Calu3 (cell line): ENCODE measurements at regions of chr19 and their contacts with region 1.

Region 1: DNA sequence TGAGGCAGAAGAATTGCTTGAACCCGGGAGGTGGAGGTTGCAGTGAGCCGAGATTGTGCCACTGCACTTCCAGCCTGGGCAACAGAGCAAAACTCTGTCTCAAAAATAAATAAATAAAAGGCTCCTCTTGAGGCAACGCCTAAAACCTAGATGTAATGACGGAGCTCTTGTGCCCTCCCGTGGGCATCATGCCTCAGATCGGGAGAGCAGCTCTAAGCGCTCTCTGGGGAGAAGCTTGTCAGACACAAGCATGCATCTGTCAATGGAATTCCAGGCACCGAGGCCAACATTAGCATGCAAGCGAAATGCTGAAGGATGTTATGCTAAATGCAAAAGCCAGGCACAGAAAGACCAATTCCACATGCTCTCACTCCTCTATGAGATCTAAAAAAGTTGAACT is 45.6 kb upstream of the MRI1 start:
- DNase-seq: peak; percentile 54
- H3K4me3 Mint-ChIP-seq: no peak overlapping the region
- H3K27ac Mint-ChIP-seq: no peak overlapping the region
- H3K4me1 Mint-ChIP-seq: no peaks in the 10 kb centered on the region
- H3K27me3 Mint-ChIP-seq: no peaks in the 10 kb centered on the region
- CTCF ChIP-seq: peak; percentile 24

Region 2: GRCh38 chr19:13597640-13598039 is 121.1 kb before region 1 on chr19:
- CTCF ChIA-PET with region 1: interaction called, 6 read pairs
- intact Hi-C with region 1: loop called (anchors 2 kb)
- DNase-seq: peak; percentile 55
- H3K4me3 Mint-ChIP-seq: no peak overlapping the region
- H3K27ac Mint-ChIP-seq: no peak overlapping the region
- H3K4me1 Mint-ChIP-seq: no peaks in the 10 kb centered on the region
- H3K27me3 Mint-ChIP-seq: peaks cover 64% of the 10 kb centered on the region
- CTCF ChIP-seq: peak; percentile 54

Region 3: DNA sequence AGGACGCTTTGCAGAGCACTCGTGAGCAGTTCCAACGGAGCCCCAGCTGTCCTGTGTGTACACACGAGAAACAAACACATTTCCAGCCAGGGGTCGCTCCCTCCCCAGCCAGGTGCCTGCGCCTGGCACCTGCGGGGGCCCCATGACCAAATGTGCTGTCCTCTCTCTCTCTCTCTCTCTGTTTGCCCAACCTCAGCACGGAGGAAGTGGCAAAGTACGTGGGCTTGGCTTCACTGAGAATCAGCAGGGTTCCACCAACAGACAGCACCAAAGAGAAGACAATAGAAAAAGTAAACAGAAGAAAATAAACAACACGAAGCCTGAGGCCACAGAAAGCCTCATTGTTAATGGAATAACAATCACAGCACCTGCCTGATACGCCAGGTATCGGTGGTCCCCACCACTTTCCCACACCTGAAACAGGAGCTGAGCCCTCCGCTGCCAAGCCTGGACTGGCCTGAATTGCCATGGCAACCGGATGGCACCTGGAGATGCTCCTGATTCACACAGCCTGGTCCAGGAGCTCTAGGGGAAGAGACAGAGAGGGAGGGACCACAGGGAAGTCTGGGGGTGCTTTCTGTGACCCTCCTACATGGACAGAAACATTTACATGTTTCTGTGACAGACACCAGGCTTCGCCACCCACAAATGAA is 108.6 kb before region 1 on chr19:
- CTCF ChIA-PET with region 1: interaction called, 13 read pairs
- intact Hi-C with region 1: no loop called
- DNase-seq: peak; percentile 27
- H3K4me3 Mint-ChIP-seq: no peak overlapping the region
- H3K27ac Mint-ChIP-seq: no peak overlapping the region
- H3K4me1 Mint-ChIP-seq: peaks cover 8% of the 10 kb centered on the region
- H3K27me3 Mint-ChIP-seq: peaks cover 5% of the 10 kb centered on the region
- CTCF ChIP-seq: no peak

Region 4: GRCh38 chr19:13621413-13621812 is 97.3 kb before region 1 on chr19:
- CTCF ChIA-PET with region 1: interaction called, 4 read pairs
- intact Hi-C with region 1: loop called (anchors 1 kb)
- DNase-seq: peak; percentile 67
- H3K4me3 Mint-ChIP-seq: no peak overlapping the region
- H3K27ac Mint-ChIP-seq: no peak overlapping the region
- H3K4me1 Mint-ChIP-seq: peaks cover 8% of the 10 kb centered on the region
- H3K27me3 Mint-ChIP-seq: peaks cover 64% of the 10 kb centered on the region
- CTCF ChIP-seq: no peak

Region 5: GRCh38 chr19:13670827-13671226 is 47.9 kb before region 1 on chr19:
- CTCF ChIA-PET with region 1: no interaction called
- intact Hi-C with region 1: no loop called
- DNase-seq: no peak
- H3K4me3 Mint-ChIP-seq: no peak overlapping the region
- H3K27ac Mint-ChIP-seq: no peak overlapping the region
- H3K4me1 Mint-ChIP-seq: no peaks in the 10 kb centered on the region
- H3K27me3 Mint-ChIP-seq: no peaks in the 10 kb centered on the region
- CTCF ChIP-seq: no peak

Region 6: GRCh38 chr19:13707915-13708314 is 10.8 kb before region 1 on chr19:
- CTCF ChIA-PET with region 1: no interaction called
- intact Hi-C with region 1: no loop called
- DNase-seq: no peak
- H3K4me3 Mint-ChIP-seq: no peak overlapping the region
- H3K27ac Mint-ChIP-seq: no peak overlapping the region
- H3K4me1 Mint-ChIP-seq: no peaks in the 10 kb centered on the region
- H3K27me3 Mint-ChIP-seq: no peaks in the 10 kb centered on the region
- CTCF ChIP-seq: no peak

Region 7: GRCh38 chr19:13764101-13764807 is 45.5 kb after region 1 on chr19 and contains the start of gene MRI1:
- CTCF ChIA-PET with region 1: no interaction called
- intact Hi-C with region 1: no loop called
- DNase-seq: peak; percentile 74
- H3K4me3 Mint-ChIP-seq: peak within 1 kb of the TSS; percentile 69
- H3K27ac Mint-ChIP-seq: peak within 1 kb of the TSS; percentile 73
- H3K4me1 Mint-ChIP-seq: peaks cover 11% of the 10 kb centered on the region
- H3K27me3 Mint-ChIP-seq: no peaks in the 10 kb centered on the region
- CTCF ChIP-seq: no peak
- total RNA-seq, gene MRI1: 30.2 and 32.6 TPM in 2 replicates

Region 8: DNA sequence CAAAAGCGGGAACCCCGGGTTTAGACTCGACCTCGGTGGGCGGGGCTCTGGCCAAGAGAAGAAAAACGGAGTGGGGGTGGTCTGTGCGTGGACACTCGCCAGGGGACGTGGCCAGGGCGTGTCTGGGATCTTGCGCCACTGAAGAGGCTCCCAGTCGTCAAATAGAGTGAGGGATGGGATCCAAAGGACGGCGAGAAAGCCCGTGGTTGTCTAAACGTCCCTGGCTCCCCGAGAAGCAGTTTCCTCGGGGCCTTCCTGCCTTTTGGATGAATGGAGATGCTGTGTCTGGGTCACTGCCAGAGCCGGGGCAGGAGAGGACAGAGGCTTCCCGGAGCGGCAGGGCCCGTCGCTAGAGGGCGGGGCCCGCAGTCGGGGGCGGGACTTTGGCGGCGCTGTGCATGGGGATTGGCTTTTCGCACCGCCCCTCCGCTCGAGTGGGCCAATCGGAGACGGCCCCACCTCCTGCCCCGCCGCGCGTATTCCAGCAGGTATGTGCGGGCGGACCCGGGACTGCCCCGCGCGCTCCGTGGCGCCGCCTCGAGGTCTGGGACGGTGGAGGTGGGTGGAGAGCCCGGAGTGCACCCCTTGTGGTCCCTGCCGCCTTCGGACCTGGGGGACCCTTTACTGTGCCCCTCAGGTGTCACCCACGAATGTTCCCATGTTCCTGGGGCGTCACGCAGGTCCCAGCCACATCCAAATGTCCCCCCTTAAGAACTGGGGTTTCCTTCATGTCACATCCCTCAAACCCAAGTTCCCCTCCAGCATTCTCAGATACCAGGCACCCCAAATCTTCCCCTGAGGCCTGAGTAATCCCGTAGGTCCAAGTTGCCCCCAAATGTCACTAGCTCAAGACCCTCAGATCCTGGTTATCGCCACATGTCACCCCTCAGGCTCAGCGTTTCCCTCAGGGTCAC is 114.9 kb after region 1 on chr19:
- CTCF ChIA-PET with region 1: no interaction called
- intact Hi-C with region 1: no loop called
- DNase-seq: peak; percentile 94
- H3K4me3 Mint-ChIP-seq: peak overlapping the region; percentile 50
- H3K27ac Mint-ChIP-seq: peak overlapping the region; percentile 93
- H3K4me1 Mint-ChIP-seq: peaks cover 8% of the 10 kb centered on the region
- H3K27me3 Mint-ChIP-seq: no peaks in the 10 kb centered on the region
- CTCF ChIP-seq: peak; percentile 28